ENCODE measurements at regions of chr3 and their contacts with region 1.

Region 1: DNA sequence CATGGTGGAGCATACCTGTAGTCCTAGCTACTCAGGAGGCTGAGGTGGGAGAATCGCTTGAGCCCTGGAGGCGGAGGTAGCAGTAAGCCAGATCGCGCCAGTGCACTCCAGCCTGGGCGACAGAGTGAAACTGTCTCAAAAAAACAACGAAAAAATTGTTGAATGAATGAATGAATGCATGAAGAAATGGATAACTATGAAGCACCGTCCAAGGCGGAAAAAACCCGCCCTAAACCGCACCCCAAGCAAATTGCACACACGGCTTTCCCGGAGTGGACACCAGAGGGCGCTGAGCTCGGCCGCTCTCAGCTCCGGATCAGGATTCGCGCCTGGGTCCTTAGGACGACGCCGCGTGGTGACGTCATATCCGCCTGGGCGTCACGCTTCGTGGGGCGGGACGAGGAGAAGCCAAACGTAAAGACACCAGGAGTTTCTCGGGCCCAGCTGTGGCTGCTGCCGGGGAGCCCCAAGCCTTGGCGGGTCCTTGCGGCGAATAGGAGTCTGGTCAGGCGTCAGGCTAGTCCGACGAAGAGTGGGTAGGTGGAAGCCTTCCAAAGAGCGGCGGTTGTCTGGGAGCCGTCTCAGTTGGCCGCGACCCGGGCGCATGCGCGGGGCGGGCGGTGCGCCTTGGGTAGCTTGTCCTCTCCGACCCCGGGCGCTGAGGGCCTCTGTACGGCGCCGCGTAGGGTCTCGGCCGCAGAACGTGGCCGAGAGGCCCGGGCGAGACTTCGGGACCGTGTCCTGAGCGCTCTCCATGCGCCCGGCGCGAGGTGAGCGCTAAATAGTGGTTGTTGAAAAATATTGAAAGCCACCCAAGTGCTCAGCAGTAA is at the starts of genes HTD2 and RPP14:
- DNase-seq: peak; percentile 99
- ATAC-seq: peak; percentile 98
- H3K4me3 ChIP-seq: peak within 1 kb of the TSS; percentile 80
- H3K27ac ChIP-seq: peak within 1 kb of the TSS; percentile 99
- H3K4me1 ChIP-seq: peaks cover 24% of the 10 kb centered on the region
- H3K27me3 ChIP-seq: no peaks in the 10 kb centered on the region
- CTCF ChIP-seq: peak; percentile 99
- total RNA-seq, gene HTD2: 6.2 TPM
- total RNA-seq, gene RPP14: 13.6 TPM

Region 2: DNA sequence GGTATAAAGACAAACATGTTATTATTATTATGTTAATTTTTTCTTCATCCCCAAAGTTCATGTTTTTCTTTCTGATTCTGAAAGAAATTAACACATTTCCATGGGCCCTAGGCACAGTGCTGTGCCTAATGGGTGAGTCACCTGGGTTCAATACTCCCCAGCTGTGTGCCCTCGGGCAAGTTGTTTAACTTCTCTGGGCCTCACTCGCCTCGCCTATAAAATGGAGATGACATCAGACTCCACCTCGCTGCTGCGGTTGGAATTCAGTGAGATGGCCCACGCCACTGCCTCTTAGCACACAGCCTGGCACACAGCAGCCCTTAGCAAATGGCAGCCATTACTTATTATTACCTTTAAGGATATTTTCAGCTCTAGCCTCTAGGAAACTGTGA is 117.9 kb before region 1 on chr3:
- intact Hi-C with region 1: loop called (anchors 2 kb)
- DNase-seq: no peak
- ATAC-seq: no peak
- H3K4me3 ChIP-seq: no peak overlapping the region
- H3K27ac ChIP-seq: no peak overlapping the region
- H3K4me1 ChIP-seq: peaks cover 3% of the 10 kb centered on the region
- H3K27me3 ChIP-seq: no peaks in the 10 kb centered on the region
- CTCF ChIP-seq: no peak

Measured in upper lobe of right lung (tissue), 1 donor.